Left cardiac atrium (tissue), 4 donors: ENCODE measurements at regions of chr14 and their contacts with region 1.

Region 1: GRCh38 chr14:75469606-75470237 is 41.9 kb downstream of the JDP2 start:
- DNase-seq: no peak
- ATAC-seq: no peak

Region 2: DNA sequence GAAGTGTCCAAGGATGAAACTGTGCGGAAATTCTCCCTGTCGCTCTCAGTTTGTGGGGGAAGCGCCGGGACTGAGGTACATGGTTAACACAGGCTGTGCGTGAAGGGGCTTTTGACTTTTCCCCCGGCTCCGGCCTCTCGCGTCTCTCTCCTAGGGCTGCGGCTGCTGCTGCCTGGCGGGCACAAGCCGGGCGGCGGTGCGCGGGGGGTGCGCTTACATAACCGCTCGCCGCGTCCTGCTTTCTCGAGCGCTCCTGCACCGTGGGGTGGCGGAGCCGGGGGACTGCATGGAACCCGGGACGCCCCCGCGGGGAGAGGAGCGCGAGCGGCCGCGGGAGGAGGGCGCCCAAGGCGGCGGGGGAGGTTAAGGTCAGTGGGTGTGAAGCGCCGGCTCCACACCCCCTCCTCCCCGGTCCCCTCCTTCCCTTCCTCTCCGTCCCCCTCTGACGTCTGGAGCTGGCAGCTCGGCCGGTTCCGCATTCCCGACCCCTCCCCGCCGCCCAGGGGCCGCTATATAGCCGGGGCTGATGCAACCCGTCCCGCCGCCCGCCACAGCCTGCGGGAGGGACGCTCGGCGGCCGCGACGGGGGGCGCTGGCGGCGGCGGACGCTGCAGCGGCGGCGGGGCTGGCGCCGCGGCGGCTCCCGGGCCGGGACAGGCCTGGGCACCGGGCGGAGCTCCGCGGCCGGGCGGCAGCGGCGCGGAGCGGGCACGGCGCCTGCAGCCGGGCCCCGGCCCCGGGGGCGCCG is 42.1 kb before region 1 on chr14 and contains the start of gene JDP2:
- intact Hi-C with region 1: loop called in 1 of 2 experiments (anchors 5 kb)
- DNase-seq: peak; percentile 96
- ATAC-seq: peak; percentile 92 to 93
- total RNA-seq, gene JDP2: 30.5 to 32.7 TPM